ENCODE measurements at regions of chr4 and their contacts with region 1.

Region 1: GRCh38 chr4:183249857-183250256 is 70.2 kb downstream of the CLDN22 start:
- DNase-seq: no peak
- H3K4me3 ChIP-seq: no peak overlapping the region
- H3K27ac ChIP-seq: no peak overlapping the region
- H3K4me1 ChIP-seq: no peaks in the 10 kb centered on the region
- H3K27me3 ChIP-seq: no peaks in the 10 kb centered on the region
- CTCF ChIP-seq: peak in 4 of 6 experiments; percentile 22 to 46 (median 34)
- POLR2A ChIP-seq: no peak

Region 2: DNA sequence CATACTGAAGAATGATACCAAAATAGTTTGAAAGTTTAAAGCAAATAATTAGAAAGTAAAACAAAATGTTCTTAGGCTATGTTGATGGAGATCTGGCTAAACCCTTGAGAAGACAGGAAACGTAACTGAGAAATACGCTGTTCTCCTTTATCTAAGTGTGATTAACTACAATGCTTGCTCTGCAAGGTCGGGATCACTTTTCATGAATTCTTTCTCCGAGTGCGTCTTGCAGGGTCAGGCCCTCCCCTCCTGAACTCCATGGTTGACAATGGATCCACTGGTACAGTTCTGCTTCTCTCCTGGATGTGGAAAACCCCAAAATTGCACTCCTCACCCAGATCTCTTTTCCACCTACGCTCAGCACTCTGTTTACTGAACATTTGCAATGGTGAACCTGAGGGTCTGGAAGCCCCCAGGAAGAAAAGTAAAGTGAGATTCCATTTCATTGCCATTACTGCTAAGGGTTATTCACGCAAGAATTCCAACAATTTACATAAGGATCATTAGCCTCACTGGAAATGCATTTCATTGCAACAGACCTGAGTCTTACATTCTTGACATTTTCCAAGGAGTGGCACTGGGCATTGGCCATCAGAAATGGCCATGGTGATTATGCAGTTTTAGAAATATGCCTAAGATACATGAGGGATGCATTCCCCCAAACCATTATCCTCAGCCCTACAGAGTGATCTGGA is 175.4 kb before region 1 on chr4:
- intact Hi-C with region 1: loop called (anchors 5 kb)
- DNase-seq: no peak
- H3K4me3 ChIP-seq: no peak overlapping the region
- H3K27ac ChIP-seq: no peak overlapping the region
- H3K4me1 ChIP-seq: no peaks in the 10 kb centered on the region
- H3K27me3 ChIP-seq: no peaks in the 10 kb centered on the region
- CTCF ChIP-seq: no peak
- POLR2A ChIP-seq: no peak